Activated CD4-positive, alpha-beta memory T cell treated with anti-CD3 and anti-CD28 coated beads for 36 hours (primary cell): ENCODE measurements at regions of chr1 and their contacts with region 1.

Region 1: DNA sequence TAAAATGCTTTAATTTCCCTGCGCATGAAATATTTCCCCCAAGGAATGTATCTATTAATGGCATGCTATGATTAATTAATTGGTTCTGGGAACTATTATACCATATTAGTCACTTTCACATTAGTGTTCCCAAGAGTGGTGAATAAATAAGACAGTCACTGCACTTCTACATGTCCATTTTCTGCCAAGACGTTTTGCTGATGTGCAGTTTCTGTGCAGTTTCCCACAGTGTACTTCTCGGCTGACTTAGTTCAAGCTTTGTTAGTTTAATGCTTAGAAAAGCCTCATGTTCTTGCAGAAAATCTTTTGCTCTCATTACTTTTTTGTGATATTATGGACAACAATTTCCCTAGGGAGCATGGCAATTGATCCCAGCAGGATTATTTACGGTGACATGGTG is 1014.5 kb downstream of the BRINP3 start:
- DNase-seq: no peak
- H3K4me3 Mint-ChIP-seq: no peak overlapping the region
- H3K27ac Mint-ChIP-seq: no peak overlapping the region
- H3K4me1 Mint-ChIP-seq: no peaks in the 10 kb centered on the region
- H3K27me3 Mint-ChIP-seq: no peaks in the 10 kb centered on the region

Region 2: GRCh38 chr1:189323091-189323490 is 140.1 kb before region 1 on chr1:
- CTCF ChIA-PET with region 1: no interaction called
- POLR2A ChIA-PET with region 1: no interaction called
- intact Hi-C with region 1: loop called (anchors 5 kb)
- DNase-seq: no peak
- H3K4me3 Mint-ChIP-seq: no peak overlapping the region
- H3K27ac Mint-ChIP-seq: no peak overlapping the region
- H3K4me1 Mint-ChIP-seq: no peaks in the 10 kb centered on the region
- H3K27me3 Mint-ChIP-seq: no peaks in the 10 kb centered on the region